ENCODE measurements at regions of chr15 and their contacts with region 1.

Region 1: GRCh38 chr15:73972984-73973682 is 19.0 kb downstream of the STOML1 start:
- DNase-seq: peak; percentile 91
- ATAC-seq: peak; percentile 88
- H3K4me3 Mint-ChIP-seq: peak overlapping the region; percentile 8
- H3K27ac Mint-ChIP-seq: no peak overlapping the region
- H3K4me1 Mint-ChIP-seq: peaks cover 27% of the 10 kb centered on the region
- H3K27me3 Mint-ChIP-seq: peaks cover 12% of the 10 kb centered on the region

Region 2: DNA sequence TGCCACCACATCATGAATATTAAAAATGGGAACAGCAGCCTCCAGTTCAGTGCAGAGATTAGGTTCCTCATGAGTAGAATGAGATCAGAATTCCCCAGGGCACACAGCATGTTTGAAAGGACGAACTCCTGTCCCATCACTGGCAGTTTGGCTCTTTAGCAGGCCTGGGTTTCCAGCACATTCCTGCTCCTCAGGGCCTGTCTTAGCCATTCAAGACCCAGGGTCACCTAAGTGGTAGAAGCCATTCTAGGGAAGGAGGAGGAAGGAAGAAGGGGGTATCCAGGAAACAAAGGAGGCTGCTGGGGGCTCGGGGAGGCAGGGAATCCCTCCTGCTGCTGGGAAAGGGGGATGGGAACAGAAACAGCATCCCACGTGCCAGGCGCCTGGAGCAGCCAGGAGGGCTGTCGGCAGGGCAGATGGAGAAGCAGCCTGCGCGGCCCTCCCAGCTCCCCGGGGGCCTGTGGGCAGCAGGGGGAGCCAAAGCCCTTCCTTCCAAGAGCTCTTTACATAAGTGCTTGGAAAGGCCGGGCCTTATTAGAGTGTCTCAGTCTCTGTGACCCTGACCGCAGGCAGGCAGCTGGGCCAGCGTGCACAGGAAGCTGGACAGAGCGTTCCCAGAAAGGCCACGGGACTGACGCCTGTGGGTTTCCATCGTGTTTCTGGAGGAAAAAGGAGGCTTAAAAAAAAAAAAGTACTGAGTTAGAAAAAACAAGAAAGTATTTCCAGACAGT is 22.1 kb before region 1 on chr15:
- CTCF ChIA-PET with region 1: interaction called, 10 read pairs
- POLR2A ChIA-PET with region 1: no interaction called
- intact Hi-C with region 1: no loop called
- DNase-seq: peak; percentile 85
- ATAC-seq: peak; percentile 95
- H3K4me3 Mint-ChIP-seq: no peak overlapping the region
- H3K27ac Mint-ChIP-seq: no peak overlapping the region
- H3K4me1 Mint-ChIP-seq: peaks cover 4% of the 10 kb centered on the region
- H3K27me3 Mint-ChIP-seq: no peaks in the 10 kb centered on the region

Region 3: GRCh38 chr15:74036271-74037170 is 63.4 kb after region 1 on chr15:
- CTCF ChIA-PET with region 1: interaction called, 15 read pairs
- POLR2A ChIA-PET with region 1: no interaction called
- intact Hi-C with region 1: loop called (anchors 1 to 5 kb)
- DNase-seq: peak; percentile 30
- ATAC-seq: no peak
- H3K4me3 Mint-ChIP-seq: no peak overlapping the region
- H3K27ac Mint-ChIP-seq: no peak overlapping the region
- H3K4me1 Mint-ChIP-seq: no peaks in the 10 kb centered on the region
- H3K27me3 Mint-ChIP-seq: no peaks in the 10 kb centered on the region

Region 4: DNA sequence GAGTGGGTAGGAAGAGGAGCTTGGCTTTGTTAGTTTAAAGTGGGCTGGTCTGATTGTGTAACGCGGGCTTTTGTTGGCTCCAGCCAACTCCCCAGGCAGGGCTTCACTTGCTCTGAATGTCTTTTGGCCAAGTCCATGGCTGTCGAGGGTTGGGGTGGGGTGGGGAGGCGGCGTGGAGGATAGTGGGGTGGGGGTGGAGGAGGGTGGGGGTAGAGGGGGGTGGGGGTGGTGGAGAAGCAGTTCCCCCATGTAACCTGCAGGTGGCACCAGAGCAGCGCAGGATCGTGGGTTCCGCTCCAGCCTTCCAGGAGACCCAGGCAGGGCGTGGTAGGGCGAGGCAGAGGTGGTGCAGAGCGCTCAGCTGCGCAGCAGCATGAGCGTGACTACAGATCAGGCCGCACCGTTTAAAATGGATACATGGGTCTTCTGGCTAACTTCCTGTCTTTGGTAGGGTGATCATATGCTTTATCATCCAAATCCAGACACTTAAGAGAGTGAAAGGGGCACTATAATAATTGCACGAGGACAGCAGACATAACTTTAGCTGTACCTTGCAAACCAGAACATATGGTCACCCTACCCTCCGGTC is 80.9 kb after region 1 on chr15:
- CTCF ChIA-PET with region 1: interaction called, 31 read pairs
- POLR2A ChIA-PET with region 1: no interaction called
- intact Hi-C with region 1: no loop called
- DNase-seq: peak; percentile 88
- ATAC-seq: peak; percentile 99
- H3K4me3 Mint-ChIP-seq: no peak overlapping the region
- H3K27ac Mint-ChIP-seq: no peak overlapping the region
- H3K4me1 Mint-ChIP-seq: peaks cover 8% of the 10 kb centered on the region
- H3K27me3 Mint-ChIP-seq: no peaks in the 10 kb centered on the region

Region 5: DNA sequence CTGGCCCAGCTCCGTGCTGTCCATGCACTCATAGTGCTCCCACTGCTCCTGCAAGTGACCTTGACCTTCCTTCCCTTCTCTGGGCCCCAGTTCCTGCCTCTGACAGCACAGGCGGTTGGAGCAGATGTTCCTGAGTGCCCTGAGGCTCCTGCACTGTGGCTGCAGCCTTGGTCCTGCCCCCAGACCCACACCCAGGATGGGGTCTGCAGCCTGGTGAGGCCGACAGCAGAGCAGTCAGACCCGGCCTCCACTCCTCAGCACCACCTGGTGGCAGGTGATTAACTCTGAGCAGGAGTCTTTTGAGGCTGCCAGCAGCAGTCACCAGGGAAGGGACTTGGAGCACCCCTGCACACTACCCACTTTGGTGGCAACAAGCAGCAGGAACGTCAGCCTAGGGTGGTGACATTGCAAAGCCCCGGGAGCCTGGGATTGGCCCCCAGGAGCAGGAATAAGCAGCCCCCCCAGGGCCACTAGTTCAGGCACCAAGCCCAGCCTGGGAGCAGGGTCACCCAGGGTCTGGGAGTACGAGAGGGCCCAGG is 329.8 kb after region 1 on chr15:
- CTCF ChIA-PET with region 1: interaction called, 4 read pairs
- POLR2A ChIA-PET with region 1: no interaction called
- intact Hi-C with region 1: loop called (anchors 1 to 2 kb)
- DNase-seq: peak; percentile 73
- ATAC-seq: peak; percentile 68
- H3K4me3 Mint-ChIP-seq: no peak overlapping the region
- H3K27ac Mint-ChIP-seq: no peak overlapping the region
- H3K4me1 Mint-ChIP-seq: no peaks in the 10 kb centered on the region
- H3K27me3 Mint-ChIP-seq: peaks cover 24% of the 10 kb centered on the region